ENCODE measurements at regions of chr10 and their contacts with region 1.

Region 1: DNA sequence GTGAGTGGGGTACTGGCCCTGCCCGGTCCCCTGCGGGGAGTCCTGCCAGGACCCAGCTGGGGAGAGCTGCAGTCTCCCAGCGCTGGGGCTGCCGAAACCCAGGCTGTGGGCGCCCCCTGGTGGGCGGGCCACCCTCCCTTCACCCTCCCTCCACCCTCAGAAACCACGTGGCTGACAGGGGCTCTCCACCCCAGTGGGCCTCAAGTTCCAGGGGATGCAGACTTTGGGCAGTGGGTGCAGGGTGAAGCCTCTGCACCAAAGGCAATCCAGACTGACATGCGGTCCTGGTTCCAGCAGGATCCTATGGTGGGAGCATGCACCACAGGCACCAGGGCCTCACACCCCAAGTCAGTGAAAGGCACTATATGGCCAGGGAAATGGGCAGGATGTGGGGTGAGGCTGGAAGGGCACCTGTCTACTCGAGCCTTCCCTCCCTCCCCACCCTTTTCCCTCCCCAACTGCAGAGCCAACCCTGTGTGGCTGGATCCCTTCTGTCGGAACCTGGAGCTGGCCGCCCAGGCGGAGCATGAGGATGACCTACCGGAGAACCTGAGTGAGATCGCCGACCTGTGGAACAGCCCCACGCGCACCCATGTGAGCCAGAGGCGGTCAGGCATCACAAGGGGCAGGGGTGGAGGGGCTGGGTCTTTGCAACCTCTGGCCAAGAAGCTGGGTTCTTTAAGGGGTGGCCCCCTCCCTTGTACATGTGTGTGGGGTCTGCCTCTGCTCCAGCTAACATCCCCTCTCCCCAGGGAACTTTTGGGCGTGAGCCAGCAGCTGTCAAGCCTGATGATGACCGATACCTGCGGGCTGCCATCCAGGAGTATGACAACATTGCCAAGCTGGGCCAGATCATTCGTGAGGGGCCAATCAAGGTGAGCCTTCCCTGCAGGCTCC is 38.8 kb downstream of the PSAP start:
- DNase-seq: peak; percentile 57 to 87 (median 68)
- ATAC-seq: peak; percentile 66 to 87 (median 84)
- H3K4me3 ChIP-seq: no peak overlapping the region
- H3K27ac ChIP-seq: no peak overlapping the region
- H3K4me1 ChIP-seq: peaks cover 0 to 30% (median 10%) of the 10 kb centered on the region in 12 donors
- H3K27me3 ChIP-seq: peaks cover 0 to 9% (median 0%) of the 10 kb centered on the region in 9 donors
- CTCF ChIP-seq: peak; percentile 54 to 89 (median 84)
- POLR2A ChIP-seq: no peak

Region 2: DNA sequence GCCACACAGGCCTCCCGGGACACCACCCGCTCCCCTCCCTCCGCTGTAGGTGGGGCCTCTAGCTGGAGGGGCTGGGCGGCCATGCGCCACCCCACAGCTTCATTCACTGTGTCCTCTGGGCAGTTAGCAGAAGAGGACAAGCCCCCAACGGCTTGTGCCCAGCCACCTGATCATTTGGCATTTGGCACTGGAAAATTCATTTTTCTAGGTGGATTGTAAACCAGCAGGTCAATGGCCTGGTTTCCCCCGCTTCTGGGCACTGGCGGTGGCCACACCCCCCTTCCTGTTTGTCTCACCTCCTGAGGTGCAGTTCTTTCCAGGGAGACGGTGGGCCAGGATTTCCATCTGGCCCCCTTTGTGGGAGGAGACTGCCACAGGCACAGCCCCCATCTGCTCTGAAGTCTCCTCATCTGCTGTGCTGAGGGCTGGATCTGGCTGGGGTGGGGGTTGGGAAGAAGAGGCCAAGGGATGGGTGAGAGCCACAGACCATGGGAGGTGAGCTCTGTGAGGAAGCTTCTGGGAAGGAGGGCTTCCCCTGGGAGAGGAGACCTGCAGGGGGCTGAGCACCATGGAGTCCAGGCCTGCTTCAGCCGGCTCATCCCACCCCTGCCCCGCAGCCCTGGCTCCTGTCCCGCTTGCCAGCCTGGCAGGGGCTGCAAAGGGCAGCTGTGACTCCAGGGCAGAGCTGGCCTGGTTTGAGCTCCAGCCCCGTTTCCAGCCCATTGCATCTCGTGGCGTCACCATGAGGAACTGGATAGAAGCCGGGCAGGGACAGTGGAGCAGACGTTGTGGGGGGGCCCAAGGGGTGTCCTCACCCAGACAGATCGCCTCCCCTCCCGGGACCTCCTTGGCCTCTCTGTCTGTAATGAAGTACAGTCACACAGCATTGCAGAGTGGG is 533.3 kb before region 1 on chr10:
- intact Hi-C with region 1: no loop called
- DNase-seq: no peak
- ATAC-seq: peak in 1 of 4 donors; percentile 6
- H3K4me3 ChIP-seq: no peak overlapping the region
- H3K27ac ChIP-seq: no peak overlapping the region
- H3K4me1 ChIP-seq: peaks cover 0 to 37% (median 15%) of the 10 kb centered on the region in 12 donors
- H3K27me3 ChIP-seq: no peaks in the 10 kb centered on the region
- CTCF ChIP-seq: no peak
- POLR2A ChIP-seq: no peak

Region 3: GRCh38 chr10:71314028-71314693 is 498.1 kb before region 1 on chr10:
- intact Hi-C with region 1: loop called in 7 of 10 experiments (anchors 5 to 10 kb)
- DNase-seq: peak in 4 of 5 donors; percentile 44 to 66 (median 50)
- ATAC-seq: peak; percentile 54 to 68 (median 66)
- H3K4me3 ChIP-seq: peak overlapping the region in 4 of 12 donors; percentile 14 to 36 (median 26)
- H3K27ac ChIP-seq: peak overlapping the region in 3 of 12 donors; percentile 21 to 57 (median 30)
- H3K4me1 ChIP-seq: peaks cover 0 to 34% (median 18%) of the 10 kb centered on the region in 12 donors
- H3K27me3 ChIP-seq: no peaks in the 10 kb centered on the region
- CTCF ChIP-seq: peak; percentile 74 to 96 (median 86)
- POLR2A ChIP-seq: no peak

Region 4: GRCh38 chr10:71390461-71390835 is 421.8 kb before region 1 on chr10:
- intact Hi-C with region 1: loop called in 5 of 10 experiments (anchors 5 to 10 kb)
- DNase-seq: no peak
- ATAC-seq: peak in 1 of 4 donors; percentile 24
- H3K4me3 ChIP-seq: no peak overlapping the region
- H3K27ac ChIP-seq: no peak overlapping the region
- H3K4me1 ChIP-seq: no peaks in the 10 kb centered on the region
- H3K27me3 ChIP-seq: peaks cover 0 to 16% (median 0%) of the 10 kb centered on the region in 9 donors
- CTCF ChIP-seq: no peak
- POLR2A ChIP-seq: no peak